Naive thymus-derived CD4-positive, alpha-beta T cell (primary cell): ENCODE measurements at regions of chr14 and their contacts with region 1.

Region 1: GRCh38 chr14:61395115-61395725 is 73.8 kb downstream of the PRKCH start:
- DNase-seq: peak in 3 of 9 donors; percentile 30 to 51 (median 45)
- ATAC-seq: peak; percentile 55
- H3K4me3 ChIP-seq: no peak overlapping the region
- H3K4me3 Mint-ChIP-seq: peak overlapping the region in 8 of 10 donors; percentile 39 to 67 (median 62)
- H3K27ac ChIP-seq: peak overlapping the region; percentile 36
- H3K27ac Mint-ChIP-seq: peak overlapping the region in 8 of 9 donors; percentile 16 to 93 (median 82)
- H3K4me1 ChIP-seq: peaks cover 92 to 96% of the 10 kb centered on the region in 2 donors
- H3K4me1 Mint-ChIP-seq: peaks cover 0 to 93% (median 67%) of the 10 kb centered on the region in 7 donors
- H3K27me3 ChIP-seq: no peaks in the 10 kb centered on the region
- H3K27me3 Mint-ChIP-seq: no peaks in the 10 kb centered on the region

Region 2: GRCh38 chr14:61381547-61381946 is 13.7 kb before region 1 on chr14:
- CTCF ChIA-PET with region 1: interaction called, 3 read pairs
- POLR2A ChIA-PET with region 1: interaction called, 13 read pairs
- intact Hi-C with region 1: loop called in 1 of 2 experiments (anchors 1 kb)
- DNase-seq: no peak
- ATAC-seq: no peak
- H3K4me3 ChIP-seq: no peak overlapping the region
- H3K4me3 Mint-ChIP-seq: peak overlapping the region in 8 of 10 donors; percentile 7 to 69 (median 59)
- H3K27ac ChIP-seq: peak overlapping the region; percentile 32
- H3K27ac Mint-ChIP-seq: peak overlapping the region in 6 of 9 donors; percentile 24 to 93 (median 86)
- H3K4me1 ChIP-seq: peaks cover 97 to 99% of the 10 kb centered on the region in 2 donors
- H3K4me1 Mint-ChIP-seq: peaks cover 0 to 56% (median 46%) of the 10 kb centered on the region in 7 donors
- H3K27me3 ChIP-seq: no peaks in the 10 kb centered on the region
- H3K27me3 Mint-ChIP-seq: no peaks in the 10 kb centered on the region